Right ventricle myocardium inferior (tissue), 1 donor: ENCODE measurements at regions of chr4 and their contacts with region 1.

Region 1: GRCh38 chr4:37389967-37390580 is 145.5 kb downstream of the NWD2 start:
- DNase-seq: no peak
- ATAC-seq: no peak

Region 2: DNA sequence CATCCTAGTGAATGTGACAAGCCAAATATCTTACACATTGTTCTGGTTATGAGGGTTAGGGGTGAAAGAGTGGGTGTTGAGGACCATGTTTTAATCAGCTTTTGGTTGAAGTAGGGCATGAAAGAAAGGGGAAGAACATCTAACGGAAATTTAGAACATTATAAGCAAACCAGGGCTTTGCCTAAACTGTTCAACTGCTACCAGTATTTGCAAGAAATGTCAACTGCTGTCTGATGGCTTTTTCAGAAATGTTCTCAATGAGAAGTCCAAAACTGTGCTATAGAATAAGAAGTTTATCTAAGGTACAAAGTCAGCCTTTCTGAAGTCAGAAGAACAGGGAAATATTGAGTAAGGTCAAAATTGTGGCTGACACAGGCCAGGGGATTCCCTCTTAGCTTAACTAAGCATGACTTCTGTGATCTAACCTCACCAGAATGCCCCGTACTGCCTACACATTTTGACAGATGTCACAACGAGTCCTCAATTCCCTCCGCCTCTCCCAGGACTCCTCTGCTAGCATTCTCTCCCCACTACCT is 1041.6 kb before region 1 on chr4:
- intact Hi-C with region 1: loop called (anchors 10 kb)
- DNase-seq: no peak
- ATAC-seq: no peak

Region 3: GRCh38 chr4:37008199-37008598 is 381.9 kb before region 1 on chr4:
- intact Hi-C with region 1: no loop called
- DNase-seq: no peak
- ATAC-seq: no peak